ENCODE measurements at regions of chr5 and their contacts with region 1.

Region 1: GRCh38 chr5:58745350-58745749 is 162.5 kb downstream of the RAB3C start:
- DNase-seq: no peak
- ATAC-seq: no peak
- H3K4me3 ChIP-seq: no peak overlapping the region
- H3K27ac ChIP-seq: no peak overlapping the region
- H3K4me1 ChIP-seq: no peaks in the 10 kb centered on the region
- H3K27me3 ChIP-seq: no peaks in the 10 kb centered on the region
- CTCF ChIP-seq: no peak

Region 2: DNA sequence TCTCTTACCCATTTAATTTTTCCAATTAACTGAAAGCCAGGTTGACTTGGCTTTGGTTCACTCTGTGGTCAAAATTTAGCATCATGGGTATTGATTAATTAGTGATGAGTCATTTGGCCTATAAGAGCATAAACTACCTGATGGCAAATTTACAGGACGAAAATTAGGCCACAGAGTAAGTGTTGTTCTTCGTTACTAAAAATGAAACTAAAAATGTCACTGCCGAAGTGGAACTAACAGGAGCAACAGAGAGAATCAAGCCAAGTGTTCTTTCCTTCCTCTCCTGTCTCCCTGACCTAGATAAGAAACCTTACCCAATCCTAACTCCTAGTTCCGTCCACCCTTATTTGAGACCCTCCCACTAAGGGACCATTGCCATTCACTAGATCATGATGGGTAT is 14.4 kb after region 1 on chr5:
- CTCF ChIA-PET with region 1: interaction called, 10 read pairs
- POLR2A ChIA-PET with region 1: no interaction called
- in situ Hi-C with region 1: no loop called
- intact Hi-C with region 1: no loop called
- DNase-seq: no peak
- ATAC-seq: 0 out of 2 replicates have a peak, but pooled peaks have one; percentile 26
- H3K4me3 ChIP-seq: peak overlapping the region; percentile 20 to 36; a peak in 3 of 4 replicates
- H3K27ac ChIP-seq: no peak overlapping the region
- H3K4me1 ChIP-seq: no peaks in the 10 kb centered on the region
- H3K27me3 ChIP-seq: no peaks in the 10 kb centered on the region
- CTCF ChIP-seq: no peak

Region 3: GRCh38 chr5:58834242-58835225 is 89.2 kb after region 1 on chr5:
- CTCF ChIA-PET with region 1: interaction called, 18 read pairs
- POLR2A ChIA-PET with region 1: no interaction called
- in situ Hi-C with region 1: no loop called
- intact Hi-C with region 1: no loop called
- DNase-seq: no peak
- ATAC-seq: no peak
- H3K4me3 ChIP-seq: no peak overlapping the region
- H3K27ac ChIP-seq: no peak overlapping the region
- H3K4me1 ChIP-seq: no peaks in the 10 kb centered on the region
- H3K27me3 ChIP-seq: no peaks in the 10 kb centered on the region
- CTCF ChIP-seq: no peak